Sigmoid colon (tissue), 7 donors: ENCODE measurements at regions of chr12 and their contacts with region 1.

Region 1: DNA sequence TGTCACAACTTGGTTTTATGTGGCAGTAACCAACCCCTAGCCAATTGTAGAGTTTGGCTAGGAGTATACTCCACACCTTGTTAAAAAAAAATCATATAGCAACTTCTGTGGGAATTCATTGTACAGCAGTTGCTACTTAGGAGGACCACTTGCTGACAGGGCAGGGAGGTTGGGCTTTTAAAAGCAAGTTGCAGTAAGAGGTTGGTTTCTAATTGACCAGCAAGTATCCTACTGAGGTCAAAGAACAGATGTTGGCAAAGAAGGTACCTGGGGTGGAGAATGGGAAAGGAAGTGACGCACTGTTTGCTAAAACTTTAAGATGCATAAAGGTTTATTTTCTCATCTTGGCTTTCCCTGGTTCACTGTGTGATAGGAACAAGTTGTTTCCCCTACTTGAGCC is 104.6 kb downstream of the TBX3 start:
- DNase-seq: no peak
- H3K4me3 ChIP-seq: no peak overlapping the region
- H3K27ac ChIP-seq: no peak overlapping the region
- H3K4me1 ChIP-seq: no peaks in the 10 kb centered on the region
- H3K27me3 ChIP-seq: peaks cover 0 to 13% (median 0%) of the 10 kb centered on the region in 3 donors
- CTCF ChIP-seq: no peak
- EP300 ChIP-seq: no peak
- POLR2A ChIP-seq: no peak

Region 2: DNA sequence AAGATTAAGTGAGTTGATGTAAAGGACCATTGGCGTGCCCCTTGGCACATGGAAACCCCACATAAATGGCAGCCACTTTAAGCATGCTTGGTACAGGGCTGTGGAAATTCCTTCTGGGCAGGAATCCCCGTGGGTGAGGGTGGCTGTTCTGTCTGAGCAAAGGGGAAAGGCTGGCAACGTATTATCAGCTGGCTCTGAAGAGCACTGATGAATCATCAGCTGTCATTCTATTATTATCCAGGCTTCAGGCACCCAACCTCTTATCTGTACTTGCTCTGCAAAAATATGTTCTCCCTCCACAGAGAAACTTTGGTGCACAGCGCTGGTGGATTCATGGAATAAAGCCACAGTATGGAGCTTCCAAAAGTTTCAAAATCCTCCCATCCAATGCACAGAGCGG is 340.6 kb before region 1 on chr12:
- intact Hi-C with region 1: no loop called
- DNase-seq: no peak
- H3K4me3 ChIP-seq: no peak overlapping the region
- H3K27ac ChIP-seq: no peak overlapping the region
- H3K4me1 ChIP-seq: peaks cover 0 to 14% (median 6%) of the 10 kb centered on the region in 4 donors
- H3K27me3 ChIP-seq: peaks cover 0 to 34% (median 5%) of the 10 kb centered on the region in 3 donors
- CTCF ChIP-seq: no peak
- EP300 ChIP-seq: no peak
- POLR2A ChIP-seq: no peak

Region 3: DNA sequence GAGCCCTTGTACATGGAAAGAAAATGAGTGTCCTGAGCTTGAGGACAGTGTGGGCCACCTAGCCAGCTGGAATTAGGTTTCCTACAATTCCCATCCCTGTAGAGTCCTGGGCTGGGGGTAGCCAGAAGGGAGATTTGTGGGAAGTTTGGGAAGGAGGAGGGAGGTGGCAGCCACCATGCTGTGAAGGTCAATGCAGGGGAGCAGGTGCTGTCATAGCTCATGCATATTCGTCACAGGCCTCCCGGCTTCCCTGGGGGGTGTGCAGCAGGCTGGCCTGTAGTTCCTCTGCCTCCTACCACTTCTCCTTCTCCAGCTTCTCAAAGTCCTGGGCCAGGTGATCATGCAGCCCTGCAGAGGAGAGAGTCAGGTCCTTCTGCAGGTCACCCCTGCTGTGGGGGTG is 16.7 kb before region 1 on chr12:
- intact Hi-C with region 1: loop called (anchors 1 kb)
- DNase-seq: no peak
- H3K4me3 ChIP-seq: no peak overlapping the region
- H3K27ac ChIP-seq: no peak overlapping the region
- H3K4me1 ChIP-seq: no peaks in the 10 kb centered on the region
- H3K27me3 ChIP-seq: no peaks in the 10 kb centered on the region
- CTCF ChIP-seq: no peak
- EP300 ChIP-seq: no peak
- POLR2A ChIP-seq: no peak

Region 4: GRCh38 chr12:115846516-115846915 is 1267.1 kb after region 1 on chr12:
- intact Hi-C with region 1: no loop called
- DNase-seq: no peak
- H3K4me3 ChIP-seq: no peak overlapping the region
- H3K27ac ChIP-seq: no peak overlapping the region
- H3K4me1 ChIP-seq: no peaks in the 10 kb centered on the region
- H3K27me3 ChIP-seq: no peaks in the 10 kb centered on the region
- CTCF ChIP-seq: no peak
- EP300 ChIP-seq: no peak
- POLR2A ChIP-seq: no peak